Activated T-helper 1 cell treated with anti-CD3 and anti-CD28 coated beads, Interleukin-12 subunit alpha, Interleukin-12 subunit beta, Interleukin-2, Interleukin-4 antibody, amounts not matched to agents 30 ng/mL and 10 ng/mL and 1 ng/mL, durations not matched to agents 14 hours and 24 hours and 36 hours (primary cell): ENCODE measurements at regions of chr21 and their contacts with region 1.

Region 1: GRCh38 chr21:34888569-34889319 is 160.4 kb downstream of the RUNX1 start:
- DNase-seq: peak; percentile 80
- H3K4me3 Mint-ChIP-seq: peak overlapping the region; percentile 93
- H3K27ac Mint-ChIP-seq: peak overlapping the region; percentile 99
- H3K4me1 Mint-ChIP-seq: peaks cover 54% of the 10 kb centered on the region
- H3K27me3 Mint-ChIP-seq: peaks cover 3% of the 10 kb centered on the region

Region 2: GRCh38 chr21:33380483-33380998 is 1508.2 kb before region 1 on chr21:
- intact Hi-C with region 1: no loop called
- DNase-seq: peak; percentile 70
- H3K4me3 Mint-ChIP-seq: peak overlapping the region; percentile 23
- H3K27ac Mint-ChIP-seq: peak overlapping the region; percentile 84
- H3K4me1 Mint-ChIP-seq: peaks cover 54% of the 10 kb centered on the region
- H3K27me3 Mint-ChIP-seq: peaks cover 40% of the 10 kb centered on the region

Region 3: GRCh38 chr21:34745557-34746255 is 143.0 kb before region 1 on chr21:
- intact Hi-C with region 1: loop called (anchors 1 kb)
- DNase-seq: peak; percentile 46
- H3K4me3 Mint-ChIP-seq: peak overlapping the region; percentile 13
- H3K27ac Mint-ChIP-seq: peak overlapping the region; percentile 1
- H3K4me1 Mint-ChIP-seq: peaks cover 4% of the 10 kb centered on the region
- H3K27me3 Mint-ChIP-seq: peaks cover 9% of the 10 kb centered on the region

Region 4: DNA sequence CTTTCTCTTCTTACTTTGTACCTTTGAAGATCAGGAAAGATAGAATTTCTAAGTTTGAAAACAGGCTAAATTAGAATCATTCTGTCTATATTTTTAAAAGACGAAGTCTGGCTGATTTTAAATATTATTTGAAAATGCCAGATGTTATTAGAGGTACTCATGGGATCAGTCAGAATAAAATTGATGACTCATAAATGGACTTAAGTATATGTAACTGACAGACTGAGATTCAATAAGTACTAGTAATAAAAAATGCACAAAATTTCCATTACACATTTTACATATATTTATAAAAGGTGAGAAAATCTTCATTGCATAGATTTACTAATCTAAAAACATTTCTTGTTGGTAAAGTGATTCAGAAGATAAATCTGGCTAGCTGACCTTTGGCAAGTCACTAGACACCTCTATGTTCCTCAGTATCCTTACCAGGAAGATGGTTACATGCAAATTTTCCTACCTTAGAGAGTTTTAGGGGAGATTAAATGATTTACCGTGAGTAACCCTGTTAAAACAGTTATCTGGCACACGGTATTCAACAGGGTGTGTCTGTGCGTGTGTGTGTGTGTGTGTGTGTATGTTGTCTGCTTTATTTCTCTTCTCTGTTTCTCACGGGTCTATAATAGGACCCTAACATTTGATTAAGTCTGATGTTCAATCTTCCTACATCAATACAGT is 28.6 kb before region 1 on chr21:
- intact Hi-C with region 1: no loop called
- DNase-seq: no peak
- H3K4me3 Mint-ChIP-seq: no peak overlapping the region
- H3K27ac Mint-ChIP-seq: no peak overlapping the region
- H3K4me1 Mint-ChIP-seq: peaks cover 47% of the 10 kb centered on the region
- H3K27me3 Mint-ChIP-seq: no peaks in the 10 kb centered on the region

Region 5: GRCh38 chr21:34874684-34875513 is 13.8 kb before region 1 on chr21:
- intact Hi-C with region 1: no loop called
- DNase-seq: no peak
- H3K4me3 Mint-ChIP-seq: no peak overlapping the region
- H3K27ac Mint-ChIP-seq: no peak overlapping the region
- H3K4me1 Mint-ChIP-seq: peaks cover 48% of the 10 kb centered on the region
- H3K27me3 Mint-ChIP-seq: no peaks in the 10 kb centered on the region

Region 6: GRCh38 chr21:34946916-34947534 is 58.3 kb after region 1 on chr21:
- intact Hi-C with region 1: loop called (anchors 1 kb)
- DNase-seq: no peak
- H3K4me3 Mint-ChIP-seq: no peak overlapping the region
- H3K27ac Mint-ChIP-seq: peak overlapping the region; percentile 90
- H3K4me1 Mint-ChIP-seq: peaks cover 62% of the 10 kb centered on the region
- H3K27me3 Mint-ChIP-seq: no peaks in the 10 kb centered on the region

Region 7: DNA sequence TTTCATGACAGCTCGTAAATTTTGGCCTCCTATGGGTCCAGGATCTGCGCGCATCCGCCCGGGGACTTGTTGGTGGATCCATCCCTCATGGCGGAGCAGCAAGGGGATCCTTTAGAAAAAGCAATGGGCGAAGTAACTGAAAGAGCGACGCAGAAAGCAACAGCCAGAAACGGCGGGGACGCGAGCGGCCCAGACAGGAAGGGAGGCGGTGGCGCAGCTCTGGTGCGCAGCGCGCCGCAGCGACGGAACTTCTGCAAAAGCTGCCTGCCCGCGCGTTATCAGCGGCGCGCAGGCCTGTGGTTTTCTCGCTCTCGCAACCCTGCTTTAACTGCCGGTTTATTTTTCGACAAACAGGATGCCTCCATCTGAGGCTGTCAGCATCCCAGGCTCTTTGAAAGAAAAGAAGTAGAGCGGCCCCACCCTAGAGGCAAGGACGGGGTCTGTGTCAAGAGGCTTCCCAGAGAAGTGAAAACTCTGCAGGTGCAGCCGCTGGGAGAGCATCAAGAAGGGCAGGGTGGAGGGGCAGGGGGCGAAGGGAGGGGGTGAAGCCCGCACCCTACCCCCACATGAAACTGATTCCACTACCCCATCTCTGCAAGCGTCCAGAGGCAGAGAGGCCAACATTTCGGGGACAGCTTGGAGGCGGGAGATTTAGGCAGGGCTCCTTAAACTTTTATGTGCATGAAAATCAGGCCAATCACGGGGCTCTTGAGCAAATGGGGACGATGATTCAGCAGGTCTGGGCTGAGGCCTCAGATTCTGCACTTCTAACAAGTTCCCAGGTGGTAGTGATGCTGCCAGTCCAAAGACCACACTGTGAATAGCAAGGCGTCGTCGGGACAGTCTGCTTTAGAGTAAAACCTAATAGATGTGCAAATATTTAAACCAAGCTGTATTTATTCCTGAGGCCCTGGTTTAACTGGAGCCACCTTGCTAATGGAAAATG is 138.1 kb after region 1 on chr21:
- intact Hi-C with region 1: loop called (anchors 1 kb)
- DNase-seq: peak; percentile 83
- H3K4me3 Mint-ChIP-seq: peak overlapping the region; percentile 85
- H3K27ac Mint-ChIP-seq: peak overlapping the region; percentile 99
- H3K4me1 Mint-ChIP-seq: peaks cover 91% of the 10 kb centered on the region
- H3K27me3 Mint-ChIP-seq: no peaks in the 10 kb centered on the region

Region 8: GRCh38 chr21:35226948-35227744 is 338.4 kb after region 1 on chr21:
- intact Hi-C with region 1: loop called (anchors 1 kb)
- DNase-seq: peak; percentile 42
- H3K4me3 Mint-ChIP-seq: peak overlapping the region; percentile 27
- H3K27ac Mint-ChIP-seq: peak overlapping the region; percentile 6
- H3K4me1 Mint-ChIP-seq: peaks cover 41% of the 10 kb centered on the region
- H3K27me3 Mint-ChIP-seq: peaks cover 10% of the 10 kb centered on the region

Region 9: DNA sequence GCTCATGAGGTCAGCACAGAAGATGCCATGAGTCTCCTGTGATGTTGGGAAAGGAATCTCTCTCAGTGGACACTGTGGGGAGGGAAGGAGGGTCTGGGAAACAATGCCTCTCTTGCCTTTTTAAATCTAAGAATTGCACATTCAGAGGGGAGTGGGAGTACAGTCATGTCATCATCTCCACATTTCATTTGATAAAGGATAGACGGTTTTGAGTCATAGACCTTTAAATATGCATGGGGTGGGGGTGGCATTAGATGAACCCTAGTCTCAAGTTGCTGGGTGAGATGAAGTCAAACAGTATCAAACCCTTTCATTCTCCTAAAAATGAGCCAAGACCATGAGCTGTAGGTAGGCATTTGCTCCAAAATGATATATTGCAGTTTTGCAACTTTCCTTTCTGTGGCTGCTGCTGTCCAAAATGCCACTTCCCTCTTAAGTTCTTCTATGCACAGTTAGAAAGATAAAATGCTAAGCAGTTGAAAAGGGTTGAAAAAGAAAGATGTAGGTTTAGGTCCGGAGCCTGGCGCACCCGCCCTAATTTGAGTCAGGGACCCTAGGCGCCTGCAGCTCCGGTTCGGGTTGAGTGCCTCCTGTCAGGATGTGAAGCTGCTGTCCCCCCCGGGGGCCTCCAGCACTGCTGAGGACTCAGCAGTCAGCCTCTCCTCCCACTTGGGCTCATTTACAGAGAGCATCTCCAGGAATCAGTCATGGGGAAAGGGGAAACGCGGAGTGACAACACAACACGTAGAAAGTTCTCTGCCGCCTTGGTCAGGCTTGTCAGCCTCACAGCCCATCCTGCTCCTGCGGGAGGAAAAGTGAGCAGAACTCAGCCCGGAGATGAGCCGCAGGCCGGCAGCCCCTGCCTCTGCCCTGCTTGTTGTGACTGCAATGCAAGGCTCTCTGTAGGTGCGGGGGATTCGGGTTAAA is 639.6 kb after region 1 on chr21:
- intact Hi-C with region 1: loop called (anchors 5 kb)
- DNase-seq: peak; percentile 26
- H3K4me3 Mint-ChIP-seq: peak overlapping the region; percentile 84
- H3K27ac Mint-ChIP-seq: peak overlapping the region; percentile 93
- H3K4me1 Mint-ChIP-seq: peaks cover 64% of the 10 kb centered on the region
- H3K27me3 Mint-ChIP-seq: no peaks in the 10 kb centered on the region